ENCODE measurements at regions of chr11 and their contacts with region 1.

Region 1: GRCh38 chr11:113034576-113034975 is 73.4 kb downstream of the NCAM1 start:
- DNase-seq: no peak
- H3K4me3 ChIP-seq: no peak overlapping the region
- H3K27ac ChIP-seq: no peak overlapping the region
- H3K4me1 ChIP-seq: no peaks in the 10 kb centered on the region
- H3K27me3 ChIP-seq: no peaks in the 10 kb centered on the region
- CTCF ChIP-seq: no peak
- POLR2A ChIP-seq: no peak

Region 2: DNA sequence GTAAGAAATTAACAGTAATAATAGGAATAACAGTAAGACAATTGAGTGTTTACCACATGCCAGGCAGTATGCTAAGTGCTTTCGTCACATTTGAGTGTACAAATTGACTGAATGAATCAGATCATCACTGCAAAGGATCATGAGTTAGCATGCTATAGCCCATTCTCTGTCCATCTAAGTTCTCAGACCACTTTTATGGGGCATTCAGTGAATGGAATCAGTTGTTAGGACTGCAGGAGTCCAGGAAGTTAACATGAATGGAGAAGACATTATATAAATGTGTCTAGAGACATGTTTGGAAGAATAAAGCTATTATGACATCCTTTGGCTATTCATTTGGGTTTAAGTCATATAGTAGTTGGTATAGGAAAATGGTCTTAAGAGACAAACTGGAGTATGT is 13.5 kb before region 1 on chr11:
- intact Hi-C with region 1: loop called (anchors 1 kb)
- DNase-seq: no peak
- H3K4me3 ChIP-seq: no peak overlapping the region
- H3K27ac ChIP-seq: no peak overlapping the region
- H3K4me1 ChIP-seq: no peaks in the 10 kb centered on the region
- H3K27me3 ChIP-seq: no peaks in the 10 kb centered on the region
- CTCF ChIP-seq: no peak
- POLR2A ChIP-seq: no peak

Measured in breast epithelium (tissue), 4 donors.